Prostate gland (tissue), 2 donors: ENCODE measurements at regions of chr1 and their contacts with region 1.

Region 1: DNA sequence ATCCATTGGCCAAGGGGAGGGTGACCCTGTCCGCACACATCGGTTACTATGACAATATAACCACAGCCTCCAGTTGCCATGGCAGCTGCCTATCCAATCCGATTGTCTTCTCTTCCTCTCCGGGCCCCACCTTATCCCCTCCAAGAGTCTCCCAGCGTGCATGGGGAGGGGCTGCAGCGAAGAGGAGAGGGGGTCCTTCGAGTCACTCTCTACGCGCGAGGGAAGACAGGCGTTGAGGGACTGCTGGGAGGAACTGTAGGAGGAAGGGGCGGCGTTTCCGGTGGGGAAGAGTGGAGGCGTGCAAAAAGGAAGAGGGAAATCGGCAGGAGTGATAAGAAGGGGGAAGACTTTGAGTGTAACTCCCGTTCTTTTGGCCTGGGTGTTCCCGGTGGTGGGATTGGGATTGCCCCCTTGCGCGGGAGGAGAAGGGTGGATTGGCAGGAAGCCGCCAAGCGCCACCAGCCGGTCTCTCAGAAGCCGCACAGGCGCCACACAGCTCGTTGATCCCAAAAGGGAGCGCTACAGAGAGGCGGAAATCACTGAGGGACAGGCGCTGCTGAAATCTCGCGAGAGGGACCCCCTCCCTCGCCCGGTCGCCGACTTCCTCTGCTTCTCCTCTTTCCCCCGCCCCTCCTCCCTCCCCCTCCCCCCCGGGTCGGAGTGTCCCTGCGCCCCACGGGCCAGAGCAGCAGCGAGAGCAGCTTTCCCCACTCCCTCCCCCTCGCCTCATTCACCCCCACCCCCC is 384 bp upstream of the SMG7 start:
- DNase-seq: peak; percentile 97
- H3K4me3 ChIP-seq: peak overlapping the region; percentile 94 to 96
- H3K27ac ChIP-seq: peak overlapping the region; percentile 95 to 96
- H3K4me1 ChIP-seq: peaks cover 10% of the 10 kb centered on the region
- H3K27me3 ChIP-seq: no peaks in the 10 kb centered on the region
- CTCF ChIP-seq: peak in 2 of 4 experiments; percentile 5 to 27
- POLR2A ChIP-seq: no peak

Region 2: DNA sequence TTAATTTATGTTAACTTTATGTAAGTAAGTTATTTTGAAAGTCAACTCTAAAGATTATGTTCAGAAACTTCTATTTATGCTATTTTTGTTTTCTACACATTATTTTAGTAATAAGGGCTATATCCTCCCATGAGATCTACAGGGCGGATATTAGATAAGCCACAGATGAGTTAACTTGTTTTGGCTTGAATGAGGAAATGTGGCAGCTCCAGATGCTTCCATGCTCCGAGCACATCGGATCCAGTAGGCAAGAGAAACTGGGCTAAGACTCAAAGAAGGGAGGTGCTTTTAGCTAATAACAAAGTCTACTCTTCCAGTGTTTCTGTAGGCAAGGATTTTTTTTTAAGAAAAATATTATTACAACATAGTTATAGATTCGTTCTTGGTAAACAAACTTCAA is 468.7 kb before region 1 on chr1:
- intact Hi-C with region 1: no loop called
- DNase-seq: no peak
- H3K4me3 ChIP-seq: no peak overlapping the region
- H3K27ac ChIP-seq: no peak overlapping the region
- H3K4me1 ChIP-seq: no peaks in the 10 kb centered on the region
- H3K27me3 ChIP-seq: no peaks in the 10 kb centered on the region
- CTCF ChIP-seq: no peak
- POLR2A ChIP-seq: no peak

Region 3: GRCh38 chr1:183544598-183545297 is 72.8 kb after region 1 on chr1:
- intact Hi-C with region 1: loop called (anchors 5 kb)
- DNase-seq: no peak
- H3K4me3 ChIP-seq: no peak overlapping the region
- H3K27ac ChIP-seq: no peak overlapping the region
- H3K4me1 ChIP-seq: no peaks in the 10 kb centered on the region
- H3K27me3 ChIP-seq: no peaks in the 10 kb centered on the region
- CTCF ChIP-seq: no peak
- POLR2A ChIP-seq: no peak

Region 4: GRCh38 chr1:183622884-183623785 is 151.2 kb after region 1 on chr1:
- intact Hi-C with region 1: loop called (anchors 5 kb)
- DNase-seq: peak; percentile 39
- H3K4me3 ChIP-seq: no peak overlapping the region
- H3K27ac ChIP-seq: no peak overlapping the region
- H3K4me1 ChIP-seq: peaks cover 5% of the 10 kb centered on the region
- H3K27me3 ChIP-seq: no peaks in the 10 kb centered on the region
- CTCF ChIP-seq: peak; percentile 13 to 58 (median 38)
- POLR2A ChIP-seq: no peak

Region 5: GRCh38 chr1:183635606-183636333 is 163.9 kb after region 1 on chr1 and contains the start of gene ARPC5:
- intact Hi-C with region 1: loop called (anchors 5 kb)
- DNase-seq: peak; percentile 94
- H3K4me3 ChIP-seq: peak within 1 kb of the TSS; percentile 83 to 93
- H3K27ac ChIP-seq: peak within 1 kb of the TSS; percentile 87 to 90
- H3K4me1 ChIP-seq: no peaks in the 10 kb centered on the region
- H3K27me3 ChIP-seq: no peaks in the 10 kb centered on the region
- CTCF ChIP-seq: peak in 1 of 4 experiments; percentile 18
- POLR2A ChIP-seq: peak; percentile 89
- total RNA-seq, gene ARPC5: 62.9 to 92.8 TPM

Region 6: DNA sequence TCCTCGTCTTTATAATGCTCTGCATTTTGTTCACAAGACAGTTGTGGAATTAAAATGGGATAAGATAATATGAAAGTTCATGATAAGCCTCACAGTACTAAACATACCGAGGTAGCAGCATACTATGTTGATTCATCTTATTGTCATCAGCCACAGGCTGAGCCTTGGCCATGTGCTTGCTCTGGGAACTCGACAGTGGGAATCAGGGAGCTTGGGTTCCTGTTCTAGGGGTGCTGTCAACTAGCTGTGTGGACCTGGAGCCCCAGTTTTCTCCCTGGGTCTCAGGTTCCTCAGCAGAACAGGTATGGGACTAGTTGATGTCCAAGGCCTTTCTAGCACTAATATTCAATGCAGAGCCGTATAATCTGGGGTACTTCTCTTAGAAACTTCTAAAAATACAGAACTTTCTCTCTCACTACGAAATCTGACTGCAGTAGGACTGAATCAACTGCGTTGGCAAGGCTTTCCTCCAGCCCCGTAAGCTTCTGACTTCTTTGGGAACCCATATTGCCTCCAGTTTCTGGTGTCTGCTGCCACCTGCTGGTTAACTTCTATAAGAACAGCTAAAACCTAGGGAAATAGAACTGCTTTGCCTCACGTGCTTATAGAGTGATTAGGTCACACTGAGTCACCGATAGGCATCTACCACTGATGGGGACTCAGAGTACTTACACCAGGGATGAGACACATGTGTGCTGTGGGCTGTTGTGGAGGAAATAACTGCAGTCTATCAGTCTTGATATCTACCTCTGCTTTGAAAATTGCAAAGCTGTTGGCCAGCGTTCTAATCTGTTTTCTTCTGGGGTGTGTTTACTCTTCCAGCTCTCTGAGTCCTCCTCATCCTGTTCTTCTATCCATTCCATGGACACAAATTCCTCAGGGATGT is 444.0 kb after region 1 on chr1:
- intact Hi-C with region 1: loop called (anchors 10 kb)
- DNase-seq: peak; percentile 70
- H3K4me3 ChIP-seq: no peak overlapping the region
- H3K27ac ChIP-seq: peak overlapping the region; percentile 25 to 44
- H3K4me1 ChIP-seq: peaks cover 4% of the 10 kb centered on the region
- H3K27me3 ChIP-seq: no peaks in the 10 kb centered on the region
- CTCF ChIP-seq: peak; percentile 69 to 96 (median 90)
- POLR2A ChIP-seq: no peak

Region 7: GRCh38 chr1:184520336-184520735 is 1048.4 kb after region 1 on chr1:
- intact Hi-C with region 1: no loop called
- DNase-seq: no peak
- H3K4me3 ChIP-seq: no peak overlapping the region
- H3K27ac ChIP-seq: no peak overlapping the region
- H3K4me1 ChIP-seq: no peaks in the 10 kb centered on the region
- H3K27me3 ChIP-seq: no peaks in the 10 kb centered on the region
- CTCF ChIP-seq: no peak
- POLR2A ChIP-seq: no peak